Dendritic cell treated with granulocyte-macrophage colony-stimulating factor and Interleukin-4, amounts not matched to agents 40 ng/mL and 50 ng/mL, for 4 days (primary cell): ENCODE measurements at regions of chr7 and their contacts with region 1.

Region 1: DNA sequence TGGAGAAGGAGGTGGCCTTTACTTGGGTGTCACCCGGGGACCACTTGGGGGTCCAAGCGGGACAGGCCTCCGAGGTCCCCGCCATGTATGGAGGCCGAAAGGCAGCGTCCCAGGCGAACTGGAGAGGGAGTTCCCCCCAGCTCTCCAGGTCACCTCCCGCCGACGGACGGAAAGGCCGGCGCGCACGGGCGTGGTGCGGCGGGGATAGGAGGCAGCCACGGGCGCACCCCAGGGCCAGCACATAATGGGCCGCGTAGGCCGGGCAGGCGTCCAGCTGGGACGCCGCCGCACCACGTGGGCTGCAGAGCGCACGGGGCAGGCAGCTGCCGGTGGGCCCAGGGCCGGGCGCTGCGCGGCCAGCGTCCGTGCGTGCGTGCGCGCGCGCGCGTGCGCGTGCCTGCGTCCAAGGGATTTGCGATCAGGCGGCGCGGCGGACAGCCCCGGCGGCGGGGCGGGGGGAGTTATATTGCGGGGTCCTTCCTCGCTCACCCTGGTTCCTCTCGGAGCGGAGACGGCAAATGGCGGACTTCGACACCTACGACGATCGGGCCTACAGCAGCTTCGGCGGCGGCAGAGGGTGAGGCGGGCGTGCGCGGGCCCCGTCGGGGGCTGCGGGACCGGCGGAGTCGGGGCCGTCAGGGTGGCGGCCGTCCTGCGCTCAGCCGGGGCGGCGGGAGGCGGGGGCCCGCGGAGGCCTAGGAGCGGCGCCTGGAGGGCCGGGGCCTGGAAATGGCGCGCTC is at the start of gene EIF4H:
- H3K4me3 Mint-ChIP-seq: peak within 1 kb of the TSS; percentile 87
- H3K27ac Mint-ChIP-seq: peak within 1 kb of the TSS; percentile 93
- H3K4me1 Mint-ChIP-seq: peaks cover 30% of the 10 kb centered on the region
- H3K27me3 Mint-ChIP-seq: no peaks in the 10 kb centered on the region

Region 2: DNA sequence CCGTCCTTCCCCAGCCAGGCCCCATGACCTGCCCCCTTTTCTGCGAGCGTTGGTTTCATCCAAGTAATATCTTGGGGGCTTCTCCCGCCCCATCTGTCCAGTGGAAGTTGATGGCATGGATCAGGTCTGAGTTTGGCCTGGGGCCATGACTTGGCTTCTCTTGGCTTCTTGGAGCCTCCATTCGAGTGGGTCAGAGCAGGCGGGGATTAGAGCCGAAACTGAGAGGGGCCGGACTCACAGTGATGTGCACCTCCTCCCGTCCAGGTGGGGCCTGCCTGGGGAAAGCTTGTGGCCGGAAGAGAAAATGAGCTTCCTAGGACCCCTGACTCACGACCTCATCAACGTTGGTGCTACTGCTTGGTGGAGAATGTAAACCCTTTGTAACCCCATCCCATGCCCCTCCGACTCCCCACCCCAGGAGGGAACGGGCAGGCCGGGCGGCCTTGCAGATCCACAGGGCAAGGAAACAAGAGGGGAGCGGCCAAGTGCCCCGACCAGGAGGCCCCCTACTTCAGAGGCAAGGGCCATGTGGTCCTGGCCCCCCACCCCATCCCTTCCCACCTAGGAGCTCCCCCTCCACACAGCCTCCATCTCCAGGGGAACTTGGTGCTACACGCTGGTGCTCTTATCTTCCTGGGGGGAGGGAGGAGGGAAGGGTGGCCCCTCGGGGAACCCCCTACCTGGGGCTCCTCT is 105.5 kb before region 1 on chr7:
- intact Hi-C with region 1: loop called (anchors 5 kb)
- H3K4me3 Mint-ChIP-seq: no peak overlapping the region
- H3K27ac Mint-ChIP-seq: no peak overlapping the region
- H3K4me1 Mint-ChIP-seq: no peaks in the 10 kb centered on the region
- H3K27me3 Mint-ChIP-seq: peaks cover 12% of the 10 kb centered on the region

Region 3: GRCh38 chr7:74094224-74095101 is 79.6 kb before region 1 on chr7:
- intact Hi-C with region 1: loop called (anchors 5 kb)
- H3K4me3 Mint-ChIP-seq: peak overlapping the region; percentile 93
- H3K27ac Mint-ChIP-seq: peak overlapping the region; percentile 88
- H3K4me1 Mint-ChIP-seq: peaks cover 58% of the 10 kb centered on the region
- H3K27me3 Mint-ChIP-seq: no peaks in the 10 kb centered on the region

Region 4: GRCh38 chr7:74269757-74270277 is 95.8 kb after region 1 on chr7:
- intact Hi-C with region 1: no loop called
- H3K4me3 Mint-ChIP-seq: peak overlapping the region; percentile 71
- H3K27ac Mint-ChIP-seq: peak overlapping the region; percentile 41
- H3K4me1 Mint-ChIP-seq: peaks cover 40% of the 10 kb centered on the region
- H3K27me3 Mint-ChIP-seq: peaks cover 5% of the 10 kb centered on the region